ENCODE measurements at regions of chr1 and their contacts with region 1.

Region 1: DNA sequence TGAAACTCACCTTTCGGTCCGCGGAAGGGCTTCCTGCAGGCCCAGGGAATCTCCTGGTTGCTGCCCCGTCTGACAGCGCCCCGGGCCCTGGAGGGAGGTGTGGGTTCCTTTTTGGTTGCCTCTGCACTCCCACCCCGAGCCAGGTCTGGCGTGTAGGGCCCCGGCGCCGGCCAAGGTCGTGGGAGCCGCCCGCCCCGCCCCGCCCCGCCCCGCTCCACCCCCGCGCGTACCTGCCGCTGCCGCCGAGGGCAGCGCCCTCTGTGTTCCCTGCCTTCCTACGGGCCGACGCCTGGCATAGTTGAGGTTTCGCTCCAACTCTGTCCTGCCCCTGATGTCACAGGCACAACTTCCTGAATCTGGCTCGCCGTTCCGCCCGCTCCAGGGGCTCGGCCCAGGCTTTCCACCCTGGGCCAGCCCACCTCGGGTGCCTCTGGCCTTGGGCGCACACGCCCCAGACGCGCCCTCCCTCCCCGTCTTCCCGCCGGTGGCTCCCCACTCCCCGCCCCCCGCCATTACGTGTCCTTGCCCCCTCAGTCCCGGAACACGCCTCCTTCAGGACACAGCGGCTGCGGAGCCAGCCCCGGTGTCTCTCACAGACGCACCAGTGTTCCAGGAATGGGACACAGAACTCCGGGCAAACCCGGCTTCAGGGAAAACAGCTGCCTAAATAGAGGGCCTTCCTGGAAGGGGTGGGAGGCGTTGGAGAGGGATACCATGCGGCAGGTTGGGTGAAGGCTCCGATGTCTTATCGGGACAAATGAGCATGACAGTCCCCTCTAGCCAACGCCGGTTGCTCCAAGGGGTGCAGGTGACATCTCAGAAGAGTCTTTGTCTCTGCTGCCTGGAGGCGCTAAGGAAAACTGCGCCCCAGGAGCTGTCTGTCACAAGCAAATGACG is at the start of gene KIAA0040:
- DNase-seq: peak; percentile 80
- H3K4me3 ChIP-seq: peak within 1 kb of the TSS; percentile 79
- H3K27ac ChIP-seq: peak within 1 kb of the TSS; percentile 86
- H3K4me1 ChIP-seq: peaks cover 82% of the 10 kb centered on the region
- CTCF ChIP-seq: 0 out of 2 replicates have a peak, but pooled peaks have one; percentile 22
- total RNA-seq, gene KIAA0040: 54.7 and 57.9 TPM in 2 replicates

Region 2: DNA sequence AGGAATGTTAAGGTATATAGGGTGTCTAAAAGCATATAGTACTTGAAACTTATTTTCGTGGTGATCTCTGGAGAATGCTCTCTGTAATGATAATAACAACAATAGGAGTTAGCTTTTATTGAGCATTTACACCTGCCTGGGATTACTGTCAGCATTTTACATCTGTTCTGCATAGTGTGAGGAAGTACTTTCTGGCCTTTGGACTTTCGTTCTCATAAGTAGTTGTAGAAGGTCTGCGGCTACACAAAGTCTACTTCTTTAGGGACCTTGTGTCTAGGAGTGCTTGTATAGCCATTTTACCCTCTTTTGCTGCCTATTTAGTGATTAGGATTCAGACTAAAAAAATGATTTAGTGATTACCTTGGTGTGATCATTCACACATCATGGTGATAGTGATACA is 848.7 kb before region 1 on chr1:
- CTCF ChIA-PET with region 1: no interaction called
- POLR2A ChIA-PET with region 1: no interaction called
- intact Hi-C with region 1: no loop called
- DNase-seq: no peak
- H3K4me3 ChIP-seq: no peak overlapping the region
- H3K27ac ChIP-seq: no peak overlapping the region
- H3K4me1 ChIP-seq: peaks cover 7% of the 10 kb centered on the region
- CTCF ChIP-seq: no peak

Region 3: DNA sequence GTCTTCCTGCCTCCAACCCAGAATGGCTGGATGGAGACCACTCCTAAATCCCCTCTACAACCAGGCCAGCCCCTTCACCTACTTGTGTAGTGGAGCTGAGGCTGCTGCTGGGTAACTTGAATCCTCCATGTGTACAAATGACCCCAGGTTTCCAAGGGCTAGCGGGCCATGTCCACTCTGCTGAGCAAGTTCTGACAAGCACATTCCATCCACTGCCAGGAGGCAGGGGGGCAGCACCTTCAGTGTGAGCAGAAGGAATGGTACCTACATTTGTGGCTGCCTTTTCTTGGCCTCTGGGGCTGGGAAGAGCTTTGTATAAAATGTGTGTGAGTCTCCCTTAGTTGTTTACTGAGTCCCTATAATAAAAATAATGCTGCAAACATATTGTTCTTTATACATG is 14.8 kb before region 1 on chr1:
- CTCF ChIA-PET with region 1: interaction called, 6 read pairs
- POLR2A ChIA-PET with region 1: interaction called, 18 read pairs
- intact Hi-C with region 1: no loop called
- DNase-seq: no peak
- H3K4me3 ChIP-seq: no peak overlapping the region
- H3K27ac ChIP-seq: no peak overlapping the region
- H3K4me1 ChIP-seq: peaks cover 50% of the 10 kb centered on the region
- CTCF ChIP-seq: no peak

Region 4: GRCh38 chr1:175208773-175209492 is 16.1 kb after region 1 on chr1:
- CTCF ChIA-PET with region 1: interaction called, 10 read pairs
- POLR2A ChIA-PET with region 1: interaction called, 257 read pairs
- intact Hi-C with region 1: loop called (anchors 1 kb)
- DNase-seq: peak; percentile 91
- H3K4me3 ChIP-seq: peak overlapping the region; percentile 50
- H3K27ac ChIP-seq: peak overlapping the region; percentile 97
- H3K4me1 ChIP-seq: peaks cover 69% of the 10 kb centered on the region
- CTCF ChIP-seq: peak; percentile 49

Region 5: DNA sequence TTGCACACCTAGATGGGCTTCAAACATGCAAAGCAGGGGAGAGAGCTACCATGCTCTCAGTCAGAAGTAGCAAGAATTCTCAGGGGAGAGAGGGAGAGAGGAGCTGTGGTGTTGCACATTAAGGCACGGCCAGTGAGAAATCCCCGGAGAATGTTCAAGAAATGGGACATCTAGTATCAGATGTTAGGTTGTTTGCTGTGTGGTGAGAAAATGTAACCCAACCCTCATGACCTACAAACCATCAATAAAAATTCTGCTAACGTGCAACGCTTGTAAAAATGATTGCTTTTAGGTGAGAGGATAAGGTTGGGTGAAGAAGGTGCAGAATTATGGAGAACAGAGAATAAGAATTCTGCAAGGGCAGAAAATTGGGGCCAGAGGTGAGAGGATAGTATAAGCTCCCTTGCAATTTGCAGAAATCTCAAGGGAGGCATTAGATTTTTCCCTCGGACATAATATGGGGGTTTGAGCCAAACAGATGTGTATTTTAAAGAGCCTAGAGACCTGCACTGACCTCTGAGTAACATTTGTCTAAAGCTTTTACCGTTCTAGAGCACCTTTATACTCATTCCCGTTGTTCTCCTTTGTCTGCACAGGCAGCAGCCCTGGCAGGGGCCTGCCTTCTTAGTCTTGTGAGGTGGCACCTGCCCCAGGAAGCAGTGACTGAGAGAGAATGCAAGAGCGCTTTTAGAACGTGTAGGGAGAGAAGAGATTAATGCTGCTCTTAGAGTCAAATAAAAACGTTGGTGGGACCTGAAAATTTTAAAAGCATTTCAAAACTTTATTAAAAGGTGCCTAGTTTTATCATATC is 25.0 kb after region 1 on chr1:
- CTCF ChIA-PET with region 1: interaction called, 4 read pairs
- POLR2A ChIA-PET with region 1: interaction called, 257 read pairs
- intact Hi-C with region 1: no loop called
- DNase-seq: peak; percentile 72
- H3K4me3 ChIP-seq: peak overlapping the region; percentile 24
- H3K27ac ChIP-seq: peak overlapping the region; percentile 56
- H3K4me1 ChIP-seq: peaks cover 75% of the 10 kb centered on the region
- CTCF ChIP-seq: no peak

Region 6: DNA sequence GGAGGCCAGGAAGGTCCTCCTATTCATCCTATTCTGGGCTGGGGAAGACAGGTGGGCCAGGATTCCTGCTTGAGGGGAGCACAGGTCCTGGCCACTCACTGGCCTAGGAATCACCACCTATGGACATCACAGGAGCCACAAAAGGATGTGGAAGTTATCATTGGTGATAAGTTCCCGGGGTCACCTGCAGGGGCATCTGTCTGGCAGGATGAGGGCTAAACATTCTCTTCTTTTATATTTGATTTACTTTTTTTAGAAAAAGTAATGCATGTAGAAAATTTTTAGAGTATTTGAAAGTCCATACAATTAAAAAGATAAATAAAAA is 32.9 kb after region 1 on chr1:
- CTCF ChIA-PET with region 1: interaction called, 6 read pairs
- POLR2A ChIA-PET with region 1: interaction called, 33 read pairs
- intact Hi-C with region 1: loop called (anchors 1 kb)
- DNase-seq: no peak
- H3K4me3 ChIP-seq: peak overlapping the region; percentile 59
- H3K27ac ChIP-seq: peak overlapping the region; percentile 95
- H3K4me1 ChIP-seq: peaks cover 96% of the 10 kb centered on the region
- CTCF ChIP-seq: peak; percentile 79

Region 7: DNA sequence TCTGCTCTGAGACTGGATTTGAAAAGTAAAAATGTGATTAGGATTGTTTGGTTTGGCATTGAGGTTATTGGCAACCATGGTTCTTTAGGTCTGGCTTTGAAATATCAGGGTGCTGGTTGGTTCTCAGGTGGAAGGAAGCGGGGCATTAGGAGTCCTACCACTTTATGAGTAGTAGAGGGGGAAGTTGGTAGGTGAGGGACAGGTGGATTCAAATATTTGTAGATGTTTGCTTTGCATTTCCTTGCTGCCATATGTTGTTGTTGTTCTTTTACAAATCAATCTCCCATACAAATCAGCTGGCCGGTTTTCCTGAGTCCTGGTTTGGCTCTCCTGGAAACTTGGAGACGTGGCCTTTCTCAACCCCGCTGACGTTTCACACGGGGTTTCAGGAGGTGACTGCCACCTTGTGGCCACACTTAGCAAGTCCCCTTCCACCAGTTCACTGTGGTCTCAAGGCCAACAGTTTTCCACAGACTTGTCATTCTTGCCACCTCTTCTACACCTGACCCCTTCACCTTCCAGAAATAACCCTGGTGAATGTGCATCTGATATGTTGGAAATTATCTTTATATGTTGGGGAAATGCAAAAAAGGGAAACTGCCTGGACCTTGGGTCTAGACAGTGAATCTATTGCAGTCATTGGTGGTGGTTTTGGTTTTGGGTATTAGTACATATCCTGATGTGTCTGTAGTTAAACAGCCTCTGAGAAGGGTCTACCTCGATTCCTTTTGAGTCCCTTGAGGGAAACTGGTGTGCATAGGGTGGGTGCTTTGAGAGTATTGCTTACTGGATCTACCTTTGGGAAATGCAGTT is 126.7 kb after region 1 on chr1:
- CTCF ChIA-PET with region 1: interaction called, 4 read pairs
- POLR2A ChIA-PET with region 1: interaction called, 4 read pairs
- intact Hi-C with region 1: loop called (anchors 1 kb)
- DNase-seq: peak; percentile 86
- H3K4me3 ChIP-seq: no peak overlapping the region
- H3K27ac ChIP-seq: no peak overlapping the region
- H3K4me1 ChIP-seq: peaks cover 37% of the 10 kb centered on the region
- CTCF ChIP-seq: peak; percentile 99

Region 8: DNA sequence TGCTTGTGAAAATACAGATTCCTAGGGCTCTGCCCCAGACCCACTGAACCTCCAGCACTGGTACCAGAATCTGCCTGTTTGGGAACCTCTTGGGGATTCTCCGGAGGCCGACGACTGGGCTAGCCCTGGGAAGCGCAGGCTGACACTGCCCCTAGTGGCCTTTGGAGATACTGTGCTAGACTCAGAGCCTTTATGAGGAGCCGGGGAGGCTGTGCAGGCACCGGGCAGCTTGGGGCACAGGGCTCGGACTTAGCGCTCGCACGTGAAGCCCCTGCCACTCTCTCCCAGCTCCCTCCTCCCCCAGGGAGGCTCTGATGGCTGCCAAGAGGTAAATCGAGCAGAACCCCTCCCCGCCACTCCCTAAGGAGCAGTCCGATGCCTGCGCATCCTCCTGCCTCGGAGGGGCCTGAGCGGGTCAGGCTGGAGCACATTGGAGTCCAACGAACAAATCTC is 695.1 kb after region 1 on chr1:
- CTCF ChIA-PET with region 1: no interaction called
- POLR2A ChIA-PET with region 1: no interaction called
- intact Hi-C with region 1: no loop called
- DNase-seq: peak; percentile 30
- H3K4me3 ChIP-seq: no peak overlapping the region
- H3K27ac ChIP-seq: no peak overlapping the region
- H3K4me1 ChIP-seq: no peaks in the 10 kb centered on the region
- CTCF ChIP-seq: peak; percentile 80